ENCODE measurements at regions of chr17 and their contacts with region 1.

Region 1: GRCh38 chr17:4074831-4075495 is 67.9 kb downstream of the ZZEF1 start:
- DNase-seq: no peak
- ATAC-seq: peak; percentile 17 to 42
- H3K4me3 ChIP-seq: no peak overlapping the region
- H3K27ac ChIP-seq: peak overlapping the region; percentile 83 to 97 (median 86)
- H3K4me1 ChIP-seq: peaks cover 26 to 31% of the 10 kb centered on the region in 2 donors
- H3K27me3 ChIP-seq: no peaks in the 10 kb centered on the region
- CTCF ChIP-seq: peak; percentile 27 to 80 (median 64)
- POLR2A ChIP-seq: no peak

Region 2: GRCh38 chr17:3835410-3836229 is 239.3 kb before region 1 on chr17:
- in situ Hi-C with region 1: no loop called
- intact Hi-C with region 1: loop called (anchors 10 kb)
- DNase-seq: peak; percentile 40 to 82
- ATAC-seq: peak; percentile 97 to 98
- H3K4me3 ChIP-seq: no peak overlapping the region
- H3K27ac ChIP-seq: peak overlapping the region; percentile 73 to 75 (median 74)
- H3K4me1 ChIP-seq: peaks cover 21 to 26% of the 10 kb centered on the region in 2 donors
- H3K27me3 ChIP-seq: no peaks in the 10 kb centered on the region
- CTCF ChIP-seq: no peak
- POLR2A ChIP-seq: no peak

Region 3: GRCh38 chr17:3935140-3935542 is 139.8 kb before region 1 on chr17:
- in situ Hi-C with region 1: no loop called
- intact Hi-C with region 1: loop called (anchors 1 kb)
- DNase-seq: peak in 1 of 2 donors; percentile 53
- ATAC-seq: peak; percentile 72
- H3K4me3 ChIP-seq: no peak overlapping the region
- H3K27ac ChIP-seq: no peak overlapping the region
- H3K4me1 ChIP-seq: no peaks in the 10 kb centered on the region
- H3K27me3 ChIP-seq: no peaks in the 10 kb centered on the region
- CTCF ChIP-seq: peak; percentile 12 to 70 (median 63)
- POLR2A ChIP-seq: no peak

Region 4: DNA sequence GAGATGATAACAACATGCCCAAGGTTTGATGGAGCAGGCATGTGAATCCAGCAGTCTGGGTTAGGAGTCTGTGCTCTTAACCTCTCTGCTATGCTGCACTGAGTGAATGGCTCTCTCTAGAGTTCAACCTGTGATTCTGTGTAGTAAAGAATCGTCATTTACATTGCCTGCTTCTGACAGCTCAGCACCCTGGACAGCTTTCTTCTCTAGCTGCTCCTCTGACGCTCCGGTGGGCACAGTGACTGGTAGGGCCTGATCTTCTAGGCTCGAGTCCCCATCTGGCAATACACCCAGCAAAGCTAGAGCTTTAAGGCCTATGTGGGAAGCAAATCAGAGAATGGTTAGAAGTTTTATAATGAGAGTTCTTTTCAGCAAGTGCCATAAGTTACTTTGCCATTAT is 25.4 kb before region 1 on chr17:
- in situ Hi-C with region 1: no loop called
- intact Hi-C with region 1: no loop called
- DNase-seq: no peak
- ATAC-seq: no peak
- H3K4me3 ChIP-seq: no peak overlapping the region
- H3K27ac ChIP-seq: no peak overlapping the region
- H3K4me1 ChIP-seq: no peaks in the 10 kb centered on the region
- H3K27me3 ChIP-seq: no peaks in the 10 kb centered on the region
- CTCF ChIP-seq: no peak
- POLR2A ChIP-seq: no peak

Measured in gastrocnemius medialis (tissue), 4 donors.